Activated naive CD8-positive, alpha-beta T cell treated with anti-CD3 and anti-CD28 coated beads, Interleukin-2, amount 10 ng/mL, durations not matched to agents 7 days and 5 days (primary cell): ENCODE measurements at regions of chr14 and their contacts with region 1.

Region 1: DNA sequence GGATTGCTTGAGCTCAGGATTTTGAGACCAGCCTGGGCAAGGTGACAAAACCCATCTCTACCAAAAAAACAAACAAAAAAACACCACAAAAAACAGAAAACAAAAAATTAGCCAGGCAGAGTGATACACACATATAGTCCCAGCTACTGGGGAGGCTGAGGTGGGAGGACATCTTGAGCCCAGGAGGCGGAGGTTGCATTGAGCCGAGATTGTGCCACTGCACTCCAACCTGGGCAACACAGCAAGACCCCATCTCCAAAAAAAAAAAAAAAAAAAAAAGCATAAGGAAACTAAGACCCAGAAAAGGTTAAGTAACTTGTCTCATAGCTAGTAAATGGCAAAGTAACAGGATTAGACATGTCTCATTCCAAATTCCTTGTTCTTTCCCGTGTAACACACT is 56.3 kb upstream of the PSMA6 start:
- DNase-seq: no peak
- ATAC-seq: no peak
- H3K4me3 Mint-ChIP-seq: no peak overlapping the region
- H3K27ac Mint-ChIP-seq: no peak overlapping the region
- H3K4me1 Mint-ChIP-seq: peaks cover 16% of the 10 kb centered on the region
- H3K27me3 Mint-ChIP-seq: no peaks in the 10 kb centered on the region

Region 2: GRCh38 chr14:35304812-35305462 is 69.1 kb after region 1 on chr14:
- POLR2A ChIA-PET with region 1: interaction called, 10 read pairs
- DNase-seq: no peak
- ATAC-seq: no peak
- H3K4me3 Mint-ChIP-seq: no peak overlapping the region
- H3K27ac Mint-ChIP-seq: no peak overlapping the region
- H3K4me1 Mint-ChIP-seq: peaks cover 35% of the 10 kb centered on the region
- H3K27me3 Mint-ChIP-seq: no peaks in the 10 kb centered on the region